Right ventricle myocardium superior (tissue), 1 donor: ENCODE measurements at regions of chr11 and their contacts with region 1.

Region 1: GRCh38 chr11:110362971-110363509 is 66.6 kb upstream of the RDX start:
- DNase-seq: peak; percentile 40
- ATAC-seq: no peak

Region 2: GRCh38 chr11:110200241-110200640 is 162.8 kb before region 1 on chr11:
- intact Hi-C with region 1: loop called (anchors 5 kb)
- DNase-seq: no peak
- ATAC-seq: no peak

Region 3: DNA sequence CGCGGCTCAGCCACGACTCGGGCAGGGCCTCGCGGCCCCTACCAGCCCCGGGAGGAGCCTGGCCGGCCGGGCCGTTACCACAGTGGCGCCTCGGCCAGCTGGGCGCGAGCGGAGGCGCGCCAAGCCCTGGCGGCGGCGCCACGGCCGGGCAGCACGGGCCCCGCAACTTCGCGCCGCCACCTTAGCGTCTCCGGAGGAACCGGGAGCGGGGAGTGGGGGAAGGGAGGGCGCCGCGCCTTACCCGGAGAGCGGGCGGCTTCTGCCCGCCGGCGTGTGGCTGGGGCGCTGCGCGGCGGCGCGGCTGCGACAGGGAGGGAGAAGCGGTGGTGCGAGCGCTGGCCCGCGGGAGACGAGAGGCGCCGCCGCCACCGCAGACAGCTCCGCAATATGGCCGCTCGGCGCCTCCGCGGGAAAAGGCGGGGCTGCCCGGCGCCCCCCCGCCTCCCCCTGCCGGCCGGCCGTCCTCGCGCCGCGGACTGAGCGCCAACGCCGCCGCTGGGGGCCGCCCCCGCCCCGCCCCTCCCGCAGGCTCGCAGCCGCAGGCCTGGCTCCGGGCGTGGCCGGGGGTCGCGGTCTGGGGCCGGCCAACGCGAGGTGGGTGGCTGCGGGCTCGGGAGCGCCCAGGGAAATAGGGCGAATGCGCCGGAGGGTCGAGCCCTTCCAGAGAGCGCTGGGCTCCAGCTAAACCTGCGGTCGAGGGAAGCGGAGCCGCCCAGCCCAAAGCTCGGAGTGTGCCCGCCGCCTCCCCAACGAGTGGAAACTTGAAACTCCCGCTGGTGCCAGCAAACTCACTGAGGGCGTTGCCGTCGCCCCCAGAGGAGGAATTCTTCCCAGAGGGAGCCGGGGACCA is 66.6 kb before region 1 on chr11 and contains the start of gene RDX:
- intact Hi-C with region 1: loop called (anchors 10 kb)
- DNase-seq: peak; percentile 85
- ATAC-seq: peak; percentile 94
- total RNA-seq, gene RDX: 114 TPM